ENCODE measurements at regions of chr2 and their contacts with region 1.

Region 1: GRCh38 chr2:44618251-44619023 is 256.7 kb downstream of the CAMKMT start:
- DNase-seq: no peak
- ATAC-seq: no peak
- H3K4me3 ChIP-seq: no peak overlapping the region
- H3K4me3 Mint-ChIP-seq: no peak overlapping the region
- H3K27ac ChIP-seq: no peak overlapping the region
- H3K27ac Mint-ChIP-seq: no peak overlapping the region
- H3K4me1 ChIP-seq: peaks cover 4 to 26% of the 10 kb centered on the region in 2 experiments
- H3K4me1 Mint-ChIP-seq: peaks cover 0 to 19% (median 2%) of the 10 kb centered on the region in 3 donors
- H3K27me3 ChIP-seq: no peaks in the 10 kb centered on the region
- H3K27me3 Mint-ChIP-seq: no peaks in the 10 kb centered on the region

Region 2: DNA sequence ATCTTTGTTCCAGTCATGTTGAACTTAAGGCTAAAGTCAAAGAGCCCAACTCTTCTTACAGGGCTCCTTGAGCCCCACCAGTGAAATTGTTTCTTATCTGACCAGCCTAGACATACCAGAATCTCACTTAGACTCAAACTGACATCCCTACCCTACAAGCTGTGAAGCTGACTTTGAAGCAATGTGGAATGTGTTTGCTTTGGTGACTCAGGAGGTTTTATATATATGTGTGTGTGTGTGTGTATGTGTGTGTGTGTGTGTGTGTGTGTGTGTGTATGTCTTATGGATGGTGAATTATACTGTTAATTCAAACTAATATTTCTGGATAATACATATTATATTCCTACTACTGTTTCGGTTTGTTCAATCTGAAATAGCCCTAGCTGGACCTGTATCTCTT is 189.4 kb before region 1 on chr2:
- CTCF ChIA-PET with region 1: no interaction called
- POLR2A ChIA-PET with region 1: no interaction called
- DNase-seq: no peak
- ATAC-seq: no peak
- H3K4me3 ChIP-seq: no peak overlapping the region
- H3K4me3 Mint-ChIP-seq: no peak overlapping the region
- H3K27ac ChIP-seq: no peak overlapping the region
- H3K27ac Mint-ChIP-seq: no peak overlapping the region
- H3K4me1 ChIP-seq: peaks cover 0 to 2% of the 10 kb centered on the region in 2 experiments
- H3K4me1 Mint-ChIP-seq: peaks cover 6 to 19% (median 19%) of the 10 kb centered on the region in 3 donors
- H3K27me3 ChIP-seq: no peaks in the 10 kb centered on the region
- H3K27me3 Mint-ChIP-seq: no peaks in the 10 kb centered on the region

Region 3: GRCh38 chr2:44578421-44579135 is 39.9 kb before region 1 on chr2:
- CTCF ChIA-PET with region 1: interaction called in 1 of 2 experiments, 3 read pairs
- POLR2A ChIA-PET with region 1: interaction called in 1 of 2 experiments, 11 read pairs
- DNase-seq: no peak
- ATAC-seq: no peak
- H3K4me3 ChIP-seq: no peak overlapping the region
- H3K4me3 Mint-ChIP-seq: peak overlapping the region in 2 of 3 donors; percentile 11 to 27
- H3K27ac ChIP-seq: no peak overlapping the region
- H3K27ac Mint-ChIP-seq: no peak overlapping the region
- H3K4me1 ChIP-seq: peaks cover 0 to 8% of the 10 kb centered on the region in 2 experiments
- H3K4me1 Mint-ChIP-seq: peaks cover 36 to 51% (median 37%) of the 10 kb centered on the region in 3 donors
- H3K27me3 ChIP-seq: no peaks in the 10 kb centered on the region
- H3K27me3 Mint-ChIP-seq: no peaks in the 10 kb centered on the region